Endothelial cell of umbilical vein (primary cell): ENCODE measurements at regions of chr6 and their contacts with region 1.

Region 1: DNA sequence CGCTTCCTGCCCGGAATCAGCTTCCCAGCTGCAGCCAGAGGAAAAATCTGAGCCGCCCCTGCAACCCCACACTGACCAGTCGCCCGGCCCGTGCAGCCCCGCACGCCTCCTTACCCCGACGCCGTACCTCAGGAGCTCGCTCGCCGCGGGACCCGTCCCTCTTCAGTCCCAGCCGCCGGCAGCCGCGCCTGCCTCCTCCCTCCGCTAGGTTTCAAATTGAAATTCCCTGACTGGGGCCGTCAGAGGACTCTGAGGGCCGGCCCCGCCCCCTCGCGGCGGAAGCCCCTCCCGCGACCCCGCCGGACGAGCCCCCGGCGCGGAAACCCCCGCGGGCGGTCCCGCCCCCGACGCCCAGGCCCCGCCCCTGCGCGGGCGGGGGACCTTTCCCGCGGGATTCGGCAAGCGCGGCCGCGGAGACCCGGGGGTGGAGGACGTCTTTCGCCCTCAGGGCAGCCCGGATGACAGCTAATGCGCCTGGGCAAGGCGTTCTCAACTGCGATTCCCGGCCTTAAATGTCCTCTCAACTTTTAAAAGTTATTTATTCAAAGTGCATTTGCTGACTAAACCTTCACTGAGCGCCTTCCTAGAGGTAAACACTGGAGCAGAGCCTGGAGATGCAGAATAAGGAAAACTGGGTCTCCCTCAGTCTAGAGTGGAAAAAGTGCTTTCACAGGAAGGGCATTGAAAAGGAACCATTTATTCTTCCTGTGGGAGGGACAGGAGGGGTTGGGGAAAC is at the start of gene EPB41L2:
- DNase-seq: peak; percentile 91
- H3K4me3 ChIP-seq: peak within 1 kb of the TSS; percentile 83 to 96 (median 89)
- H3K27ac ChIP-seq: peak within 1 kb of the TSS; percentile 90
- H3K4me1 ChIP-seq: peaks cover 10% of the 10 kb centered on the region
- H3K27me3 ChIP-seq: no peaks in the 10 kb centered on the region
- CTCF ChIP-seq: peak in 1 of 2 donors; percentile 19
- POLR2A ChIP-seq: peak; percentile 60
- total RNA-seq, gene EPB41L2: 84.8 and 87.7 TPM in 2 replicates

Region 2: DNA sequence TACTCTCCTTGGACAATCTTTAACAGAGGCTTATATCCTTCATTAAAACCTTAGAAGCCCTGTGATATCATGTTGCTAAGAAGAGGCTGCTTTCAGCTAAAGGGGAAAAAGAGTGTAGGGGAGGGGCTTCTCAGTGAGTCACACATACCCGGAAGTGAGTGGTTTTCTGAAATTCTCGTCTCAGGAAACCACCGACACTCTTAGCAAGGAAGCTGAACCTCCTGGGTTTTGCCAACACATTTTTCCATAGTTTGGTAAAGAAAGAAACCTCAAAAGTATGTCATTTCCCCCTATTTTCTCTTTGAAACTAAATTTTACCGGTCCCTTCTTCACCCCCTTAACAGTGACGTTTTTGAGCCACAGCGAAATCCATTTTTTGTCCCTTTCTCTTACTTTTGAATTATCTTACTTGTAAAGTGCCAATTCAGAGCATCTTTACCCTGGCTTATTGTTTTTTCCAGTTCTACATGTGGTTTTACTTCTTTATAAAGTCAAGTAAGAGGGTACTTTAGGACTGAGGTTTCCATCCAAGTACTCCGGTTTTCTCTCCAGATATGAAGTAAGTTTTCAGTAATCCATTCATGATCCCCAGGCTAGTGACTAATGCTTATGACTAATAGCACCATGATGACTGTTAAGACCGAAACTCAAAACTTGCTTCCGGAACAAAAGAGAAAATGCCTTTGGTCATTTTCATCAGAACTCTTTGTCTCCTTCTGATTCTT is 1572.5 kb before region 1 on chr6:
- CTCF ChIA-PET with region 1: no interaction called
- POLR2A ChIA-PET with region 1: no interaction called
- dilution Hi-C with region 1: no loop called
- intact Hi-C with region 1: loop called (anchors 2 kb)
- DNase-seq: peak; percentile 95
- H3K4me3 ChIP-seq: peak overlapping the region; percentile 11 to 83 (median 41)
- H3K27ac ChIP-seq: peak overlapping the region; percentile 99
- H3K4me1 ChIP-seq: peaks cover 51% of the 10 kb centered on the region
- H3K27me3 ChIP-seq: no peaks in the 10 kb centered on the region
- CTCF ChIP-seq: no peak
- POLR2A ChIP-seq: peak; percentile 81

Region 3: DNA sequence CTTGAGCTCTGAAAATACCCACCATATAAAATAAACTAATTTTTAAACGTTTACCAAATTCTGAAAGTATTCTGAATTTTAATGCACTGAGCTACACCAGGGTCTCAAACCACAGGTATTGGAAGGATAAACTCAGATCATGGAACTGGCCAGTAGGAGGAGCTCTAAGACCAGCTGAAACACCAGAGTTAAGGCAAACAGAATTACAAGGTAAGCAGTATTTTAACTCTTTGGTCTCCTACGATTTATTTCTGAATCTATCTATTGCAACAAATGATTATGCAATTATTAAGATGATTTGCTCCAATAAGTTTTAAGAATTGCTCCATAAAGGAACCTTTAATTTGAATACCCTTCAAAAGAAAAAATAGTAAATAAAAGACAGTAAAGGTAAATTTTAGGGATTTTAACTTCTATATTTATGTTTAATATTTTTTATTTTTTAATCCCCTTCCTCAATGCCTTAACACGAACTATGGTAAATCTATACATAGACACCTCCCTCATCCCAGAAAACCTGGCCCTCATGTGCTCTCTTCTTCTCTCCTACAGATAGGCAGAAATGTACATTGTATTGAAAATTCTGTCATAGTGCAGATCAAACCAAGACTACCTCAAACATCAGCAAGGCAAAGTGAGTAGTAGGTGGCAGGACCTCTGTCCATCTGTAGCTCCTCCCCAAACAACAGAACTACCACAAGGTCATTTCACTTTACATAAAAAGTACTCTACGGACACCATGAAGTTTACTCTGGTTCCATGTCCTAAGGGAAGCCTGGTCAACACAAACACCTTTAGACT is 177.6 kb before region 1 on chr6:
- CTCF ChIA-PET with region 1: interaction called, 22 read pairs
- POLR2A ChIA-PET with region 1: no interaction called
- dilution Hi-C with region 1: no loop called
- intact Hi-C with region 1: loop called (anchors 1 kb)
- DNase-seq: peak; percentile 79
- H3K4me3 ChIP-seq: no peak overlapping the region
- H3K27ac ChIP-seq: no peak overlapping the region
- H3K4me1 ChIP-seq: peaks cover 5% of the 10 kb centered on the region
- H3K27me3 ChIP-seq: no peaks in the 10 kb centered on the region
- CTCF ChIP-seq: peak; percentile 54 to 65
- POLR2A ChIP-seq: no peak

Region 4: GRCh38 chr6:131013495-131013894 is 49.7 kb before region 1 on chr6:
- CTCF ChIA-PET with region 1: interaction called, 3 read pairs
- POLR2A ChIA-PET with region 1: interaction called, 4 read pairs
- dilution Hi-C with region 1: no loop called
- intact Hi-C with region 1: loop called (anchors 1 kb)
- DNase-seq: peak; percentile 91
- H3K4me3 ChIP-seq: no peak overlapping the region
- H3K27ac ChIP-seq: peak overlapping the region; percentile 32
- H3K4me1 ChIP-seq: peaks cover 38% of the 10 kb centered on the region
- H3K27me3 ChIP-seq: no peaks in the 10 kb centered on the region
- CTCF ChIP-seq: no peak
- POLR2A ChIP-seq: no peak

Region 5: DNA sequence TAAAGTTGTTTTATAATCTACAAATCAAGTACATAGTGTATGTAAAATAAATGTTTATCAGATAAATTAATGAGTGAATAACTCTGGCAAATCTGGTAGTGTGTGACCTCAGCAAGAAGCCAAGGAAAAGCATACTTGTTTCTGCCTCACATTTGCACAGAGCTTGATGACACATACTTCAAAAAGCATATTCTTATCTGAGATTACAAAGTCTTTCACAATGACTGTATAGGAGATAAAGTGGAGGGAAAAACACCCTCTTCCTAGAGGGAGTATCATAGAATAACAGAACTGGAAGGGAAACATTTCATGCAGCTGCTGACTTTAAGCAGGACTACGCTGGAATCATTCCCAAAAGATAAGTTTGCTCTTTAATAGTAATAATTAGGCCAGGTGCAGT is 44.0 kb after region 1 on chr6:
- CTCF ChIA-PET with region 1: interaction called, 4 read pairs
- POLR2A ChIA-PET with region 1: no interaction called
- dilution Hi-C with region 1: no loop called
- intact Hi-C with region 1: loop called (anchors 2 kb)
- DNase-seq: peak; percentile 88
- H3K4me3 ChIP-seq: no peak overlapping the region
- H3K27ac ChIP-seq: peak overlapping the region; percentile 55
- H3K4me1 ChIP-seq: peaks cover 21% of the 10 kb centered on the region
- H3K27me3 ChIP-seq: no peaks in the 10 kb centered on the region
- CTCF ChIP-seq: no peak
- POLR2A ChIP-seq: peak; percentile 47

Region 6: DNA sequence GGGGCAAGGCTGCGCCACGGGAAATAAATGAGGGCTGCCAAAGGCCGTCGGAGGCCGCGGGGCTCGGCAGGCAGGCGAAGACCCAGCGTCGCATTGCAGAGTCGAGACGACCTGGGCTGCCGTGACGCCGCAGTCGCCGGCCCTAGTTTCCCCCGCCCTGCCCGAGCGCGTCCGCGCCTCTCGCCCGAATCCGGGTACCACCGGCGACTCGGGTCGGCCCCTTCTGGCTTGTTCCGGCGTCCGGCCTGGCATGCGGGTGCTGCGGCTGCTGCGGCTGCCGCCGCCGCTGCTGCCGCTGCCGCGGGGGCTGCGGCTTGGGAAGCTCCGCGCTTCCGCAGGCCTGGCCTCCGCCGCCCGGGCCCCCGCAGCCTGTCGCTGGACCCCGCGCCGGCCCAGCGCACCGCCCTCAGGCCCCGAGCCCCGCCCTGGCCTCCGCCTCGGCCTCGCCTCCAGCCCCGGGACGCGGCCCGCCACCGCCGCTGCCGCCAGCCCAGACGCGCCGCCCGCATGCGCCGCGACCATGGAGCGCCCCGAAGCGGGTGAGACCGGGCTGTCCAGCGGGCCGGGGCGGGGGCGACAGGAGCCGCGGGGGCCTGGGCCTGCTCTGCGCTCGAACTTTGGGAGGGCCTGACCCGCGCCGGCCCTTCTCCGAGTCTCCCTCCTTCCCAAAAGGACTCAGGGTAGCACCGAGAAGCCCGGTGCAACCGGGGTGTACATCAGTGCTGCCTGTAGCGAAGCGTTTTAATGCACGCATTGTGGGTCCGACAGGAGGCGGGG is 72.2 kb after region 1 on chr6 and contains the start of gene AKAP7:
- CTCF ChIA-PET with region 1: no interaction called
- POLR2A ChIA-PET with region 1: no interaction called
- dilution Hi-C with region 1: no loop called
- intact Hi-C with region 1: no loop called
- DNase-seq: peak; percentile 67
- H3K4me3 ChIP-seq: peak within 1 kb of the TSS; percentile 60 to 94 (median 93)
- H3K27ac ChIP-seq: peak within 1 kb of the TSS; percentile 56
- H3K4me1 ChIP-seq: peaks cover 8% of the 10 kb centered on the region
- H3K27me3 ChIP-seq: no peaks in the 10 kb centered on the region
- CTCF ChIP-seq: no peak
- POLR2A ChIP-seq: peak; percentile 64
- total RNA-seq, gene AKAP7: 3.3 and 4.8 TPM in 2 replicates